ENCODE measurements at regions of chr4 and their contacts with region 1.

Region 1: GRCh38 chr4:150805183-150806025 is 209.7 kb downstream of the LRBA start:
- DNase-seq: no peak
- H3K4me3 Mint-ChIP-seq: no peak overlapping the region
- H3K27ac Mint-ChIP-seq: no peak overlapping the region
- H3K4me1 Mint-ChIP-seq: peaks cover 4% of the 10 kb centered on the region
- H3K27me3 Mint-ChIP-seq: no peaks in the 10 kb centered on the region

Region 2: DNA sequence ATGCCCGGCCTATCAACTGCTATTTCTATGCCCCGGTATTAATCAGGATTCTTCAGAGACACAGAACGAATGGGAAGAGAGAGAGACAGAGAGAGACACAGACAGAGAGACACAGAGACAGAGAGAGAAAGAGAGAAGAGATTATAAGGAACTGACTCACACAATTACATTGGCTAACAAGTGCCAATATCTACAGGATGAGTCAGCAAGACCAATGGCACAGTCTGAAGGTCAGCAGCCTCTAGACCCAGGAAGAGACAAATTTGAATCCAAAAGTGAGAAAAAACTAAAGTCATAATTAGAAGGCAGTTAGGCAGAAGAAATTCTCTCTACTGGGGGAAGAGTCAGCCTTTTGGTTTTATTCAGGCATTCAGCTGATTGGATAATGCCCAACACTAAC is 36.2 kb before region 1 on chr4:
- CTCF ChIA-PET with region 1: no interaction called
- POLR2A ChIA-PET with region 1: no interaction called
- intact Hi-C with region 1: no loop called
- DNase-seq: no peak
- H3K4me3 Mint-ChIP-seq: no peak overlapping the region
- H3K27ac Mint-ChIP-seq: no peak overlapping the region
- H3K4me1 Mint-ChIP-seq: peaks cover 14% of the 10 kb centered on the region
- H3K27me3 Mint-ChIP-seq: no peaks in the 10 kb centered on the region

Region 3: GRCh38 chr4:150818661-150819060 is 13.3 kb after region 1 on chr4:
- CTCF ChIA-PET with region 1: no interaction called
- POLR2A ChIA-PET with region 1: no interaction called
- intact Hi-C with region 1: loop called (anchors 1 kb)
- DNase-seq: no peak
- H3K4me3 Mint-ChIP-seq: no peak overlapping the region
- H3K27ac Mint-ChIP-seq: no peak overlapping the region
- H3K4me1 Mint-ChIP-seq: peaks cover 19% of the 10 kb centered on the region
- H3K27me3 Mint-ChIP-seq: no peaks in the 10 kb centered on the region

Region 4: GRCh38 chr4:150997141-150997540 is 191.7 kb after region 1 on chr4:
- CTCF ChIA-PET with region 1: no interaction called
- POLR2A ChIA-PET with region 1: no interaction called
- intact Hi-C with region 1: no loop called
- DNase-seq: no peak
- H3K4me3 Mint-ChIP-seq: no peak overlapping the region
- H3K27ac Mint-ChIP-seq: no peak overlapping the region
- H3K4me1 Mint-ChIP-seq: peaks cover 55% of the 10 kb centered on the region
- H3K27me3 Mint-ChIP-seq: no peaks in the 10 kb centered on the region

Measured in activated CD4-positive, alpha-beta memory T cell treated with anti-CD3 and anti-CD28 coated beads for 36 hours (primary cell).